B cell (primary cell): ENCODE measurements at regions of chr6 and their contacts with region 1.

Region 1: GRCh38 chr6:110815217-110816109 is at the start of gene CDK19:
- DNase-seq: peak; percentile 99
- ATAC-seq: peak; percentile 76
- H3K4me3 ChIP-seq: peak within 1 kb of the TSS; percentile 83 to 99 (median 93)
- H3K4me3 Mint-ChIP-seq: peak within 1 kb of the TSS; percentile 97
- H3K27ac ChIP-seq: peak within 1 kb of the TSS; percentile 84 to 93
- H3K27ac Mint-ChIP-seq: peak within 1 kb of the TSS; percentile 99
- H3K4me1 ChIP-seq: peaks cover 33 to 34% of the 10 kb centered on the region in 2 donors
- H3K4me1 Mint-ChIP-seq: peaks cover 39% of the 10 kb centered on the region
- H3K27me3 ChIP-seq: no peaks in the 10 kb centered on the region
- H3K27me3 Mint-ChIP-seq: no peaks in the 10 kb centered on the region
- CTCF ChIP-seq: no peak
- total RNA-seq, gene CDK19: 44.8 and 45.3 TPM in 2 replicates

Region 2: GRCh38 chr6:109482905-109483735 is 1332.3 kb before region 1 on chr6 and contains the start of gene ZBTB24:
- CTCF ChIA-PET with region 1: no interaction called
- POLR2A ChIA-PET with region 1: no interaction called
- intact Hi-C with region 1: loop called (anchors 10 kb)
- DNase-seq: peak; percentile 93
- ATAC-seq: peak; percentile 83
- H3K4me3 ChIP-seq: peak within 1 kb of the TSS; percentile 76 to 97 (median 94)
- H3K4me3 Mint-ChIP-seq: peak within 1 kb of the TSS; percentile 96
- H3K27ac ChIP-seq: peak within 1 kb of the TSS; percentile 65 to 81
- H3K27ac Mint-ChIP-seq: peak within 1 kb of the TSS; percentile 89
- H3K4me1 ChIP-seq: peaks cover 40 to 57% of the 10 kb centered on the region in 2 donors
- H3K4me1 Mint-ChIP-seq: peaks cover 50% of the 10 kb centered on the region
- H3K27me3 ChIP-seq: no peaks in the 10 kb centered on the region
- H3K27me3 Mint-ChIP-seq: no peaks in the 10 kb centered on the region
- CTCF ChIP-seq: no peak
- total RNA-seq, gene ZBTB24: 31.4 and 32.9 TPM in 2 replicates

Region 3: GRCh38 chr6:110728501-110728900 is 87.0 kb before region 1 on chr6:
- CTCF ChIA-PET with region 1: no interaction called
- POLR2A ChIA-PET with region 1: no interaction called
- intact Hi-C with region 1: no loop called
- DNase-seq: no peak
- ATAC-seq: no peak
- H3K4me3 ChIP-seq: no peak overlapping the region
- H3K4me3 Mint-ChIP-seq: no peak overlapping the region
- H3K27ac ChIP-seq: no peak overlapping the region
- H3K27ac Mint-ChIP-seq: no peak overlapping the region
- H3K4me1 ChIP-seq: peaks cover 0 to 3% of the 10 kb centered on the region in 2 donors
- H3K4me1 Mint-ChIP-seq: peaks cover 1% of the 10 kb centered on the region
- H3K27me3 ChIP-seq: no peaks in the 10 kb centered on the region
- H3K27me3 Mint-ChIP-seq: no peaks in the 10 kb centered on the region
- CTCF ChIP-seq: no peak

Region 4: DNA sequence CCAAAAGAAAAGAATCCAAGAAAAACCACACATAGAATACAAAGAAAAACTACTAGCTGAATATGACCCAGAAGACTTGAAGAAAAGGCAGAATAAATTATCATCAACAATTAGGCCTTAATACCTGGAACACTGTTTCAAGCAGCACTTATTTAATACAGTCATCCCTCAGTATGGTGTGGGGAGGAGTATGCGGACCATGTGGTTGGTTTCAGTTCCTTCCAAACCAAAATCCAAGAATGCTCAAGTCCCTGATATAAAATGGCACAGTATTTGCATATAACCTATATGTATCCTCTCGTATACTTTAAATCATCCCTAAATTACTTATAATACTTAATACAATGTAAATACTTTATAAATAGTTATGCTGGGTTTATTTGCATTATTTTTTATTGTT is 16.3 kb before region 1 on chr6:
- CTCF ChIA-PET with region 1: interaction called, 3 read pairs
- POLR2A ChIA-PET with region 1: interaction called, 14 read pairs
- intact Hi-C with region 1: no loop called
- DNase-seq: peak; percentile 49
- ATAC-seq: peak; percentile 61
- H3K4me3 ChIP-seq: no peak overlapping the region
- H3K4me3 Mint-ChIP-seq: no peak overlapping the region
- H3K27ac ChIP-seq: no peak overlapping the region
- H3K27ac Mint-ChIP-seq: no peak overlapping the region
- H3K4me1 ChIP-seq: peaks cover 16 to 22% of the 10 kb centered on the region in 2 donors
- H3K4me1 Mint-ChIP-seq: peaks cover 37% of the 10 kb centered on the region
- H3K27me3 ChIP-seq: no peaks in the 10 kb centered on the region
- H3K27me3 Mint-ChIP-seq: no peaks in the 10 kb centered on the region
- CTCF ChIP-seq: no peak

Region 5: GRCh38 chr6:110826236-110827129 is 11.0 kb after region 1 on chr6:
- CTCF ChIA-PET with region 1: no interaction called
- POLR2A ChIA-PET with region 1: no interaction called
- intact Hi-C with region 1: no loop called
- DNase-seq: peak; percentile 35
- ATAC-seq: no peak
- H3K4me3 ChIP-seq: peak overlapping the region in 1 of 5 experiments; percentile 30
- H3K4me3 Mint-ChIP-seq: peak overlapping the region; percentile 26
- H3K27ac ChIP-seq: no peak overlapping the region
- H3K27ac Mint-ChIP-seq: peak overlapping the region; percentile 20
- H3K4me1 ChIP-seq: peaks cover 4% of the 10 kb centered on the region in 2 donors
- H3K4me1 Mint-ChIP-seq: peaks cover 10% of the 10 kb centered on the region
- H3K27me3 ChIP-seq: no peaks in the 10 kb centered on the region
- H3K27me3 Mint-ChIP-seq: no peaks in the 10 kb centered on the region
- CTCF ChIP-seq: no peak

Region 6: GRCh38 chr6:110958329-110959192 is 143.1 kb after region 1 on chr6 and contains the start of gene GTF3C6:
- CTCF ChIA-PET with region 1: interaction called, 4 read pairs
- POLR2A ChIA-PET with region 1: interaction called, 14 read pairs
- intact Hi-C with region 1: loop called (anchors 1 kb)
- DNase-seq: peak; percentile 94
- ATAC-seq: peak; percentile 99
- H3K4me3 ChIP-seq: peak within 1 kb of the TSS; percentile 65 to 96 (median 93)
- H3K4me3 Mint-ChIP-seq: peak within 1 kb of the TSS; percentile 98
- H3K27ac ChIP-seq: peak within 1 kb of the TSS; percentile 88 to 94
- H3K27ac Mint-ChIP-seq: peak within 1 kb of the TSS; percentile 98
- H3K4me1 ChIP-seq: peaks cover 8 to 16% of the 10 kb centered on the region in 2 donors
- H3K4me1 Mint-ChIP-seq: peaks cover 17% of the 10 kb centered on the region
- H3K27me3 ChIP-seq: no peaks in the 10 kb centered on the region
- H3K27me3 Mint-ChIP-seq: peaks cover 4% of the 10 kb centered on the region
- CTCF ChIP-seq: no peak
- total RNA-seq, gene GTF3C6: 34.7 and 36.4 TPM in 2 replicates

Region 7: GRCh38 chr6:111534231-111534751 is 718.8 kb after region 1 on chr6:
- CTCF ChIA-PET with region 1: no interaction called
- POLR2A ChIA-PET with region 1: no interaction called
- intact Hi-C with region 1: no loop called
- DNase-seq: no peak
- ATAC-seq: no peak
- H3K4me3 ChIP-seq: no peak overlapping the region
- H3K4me3 Mint-ChIP-seq: no peak overlapping the region
- H3K27ac ChIP-seq: no peak overlapping the region
- H3K27ac Mint-ChIP-seq: peak overlapping the region; percentile 20
- H3K4me1 ChIP-seq: peaks cover 0 to 7% of the 10 kb centered on the region in 2 donors
- H3K4me1 Mint-ChIP-seq: peaks cover 18% of the 10 kb centered on the region
- H3K27me3 ChIP-seq: no peaks in the 10 kb centered on the region
- H3K27me3 Mint-ChIP-seq: no peaks in the 10 kb centered on the region
- CTCF ChIP-seq: no peak